ENCODE measurements at regions of chr10 and their contacts with region 1.

Region 1: DNA sequence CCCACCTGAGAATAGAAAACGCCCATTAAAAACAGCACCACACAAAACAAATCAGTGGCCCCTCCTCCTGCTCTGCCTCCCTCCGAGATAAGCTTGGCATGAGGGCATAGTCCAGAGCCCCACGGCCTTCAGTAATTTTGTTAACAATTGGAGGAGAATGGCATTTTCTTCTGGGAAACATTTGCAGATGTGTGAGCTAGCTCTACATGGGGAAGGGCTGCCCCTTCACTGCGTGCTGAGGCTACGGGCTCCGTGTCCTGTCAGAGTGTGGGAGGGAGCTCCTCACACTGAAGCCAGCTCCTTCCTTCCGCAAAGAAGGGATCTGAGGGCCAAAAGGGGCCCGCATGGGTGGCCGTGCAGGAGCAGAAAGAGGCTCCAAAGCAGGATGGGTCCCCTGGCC is 15.2 kb downstream of the GRK5 start:
- DNase-seq: peak in 1 of 5 donors; percentile 60
- H3K4me3 ChIP-seq: no peak overlapping the region
- H3K27ac ChIP-seq: peak overlapping the region; percentile 30 to 58
- H3K4me1 ChIP-seq: peaks cover 27% of the 10 kb centered on the region
- H3K27me3 ChIP-seq: no peaks in the 10 kb centered on the region
- CTCF ChIP-seq: no peak
- EP300 ChIP-seq: no peak
- POLR2A ChIP-seq: no peak

Region 2: DNA sequence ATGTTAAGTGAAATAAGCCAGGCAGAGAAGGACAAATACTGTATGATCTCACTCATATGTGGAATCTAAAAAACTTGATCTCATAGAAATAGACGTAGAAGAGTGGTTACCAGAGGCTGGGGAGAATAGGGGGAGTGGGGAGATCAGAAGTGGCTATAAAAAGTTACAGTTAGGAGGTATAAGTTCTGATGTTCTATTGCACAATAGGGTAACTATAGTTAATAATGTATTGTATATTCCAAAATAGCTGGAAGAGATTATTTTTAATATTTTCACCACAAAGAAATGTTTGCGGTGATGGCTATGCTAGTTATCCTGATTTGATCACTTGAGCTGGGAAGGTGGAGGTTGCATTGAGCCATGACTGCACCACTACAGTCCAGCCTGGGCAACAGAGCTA is 1927.8 kb before region 1 on chr10:
- intact Hi-C with region 1: loop called in 1 of 4 experiments (anchors 5 kb)
- DNase-seq: no peak
- H3K4me3 ChIP-seq: no peak overlapping the region
- H3K27ac ChIP-seq: no peak overlapping the region
- H3K4me1 ChIP-seq: peaks cover 3% of the 10 kb centered on the region
- H3K27me3 ChIP-seq: no peaks in the 10 kb centered on the region
- CTCF ChIP-seq: no peak
- EP300 ChIP-seq: no peak
- POLR2A ChIP-seq: no peak

Region 3: DNA sequence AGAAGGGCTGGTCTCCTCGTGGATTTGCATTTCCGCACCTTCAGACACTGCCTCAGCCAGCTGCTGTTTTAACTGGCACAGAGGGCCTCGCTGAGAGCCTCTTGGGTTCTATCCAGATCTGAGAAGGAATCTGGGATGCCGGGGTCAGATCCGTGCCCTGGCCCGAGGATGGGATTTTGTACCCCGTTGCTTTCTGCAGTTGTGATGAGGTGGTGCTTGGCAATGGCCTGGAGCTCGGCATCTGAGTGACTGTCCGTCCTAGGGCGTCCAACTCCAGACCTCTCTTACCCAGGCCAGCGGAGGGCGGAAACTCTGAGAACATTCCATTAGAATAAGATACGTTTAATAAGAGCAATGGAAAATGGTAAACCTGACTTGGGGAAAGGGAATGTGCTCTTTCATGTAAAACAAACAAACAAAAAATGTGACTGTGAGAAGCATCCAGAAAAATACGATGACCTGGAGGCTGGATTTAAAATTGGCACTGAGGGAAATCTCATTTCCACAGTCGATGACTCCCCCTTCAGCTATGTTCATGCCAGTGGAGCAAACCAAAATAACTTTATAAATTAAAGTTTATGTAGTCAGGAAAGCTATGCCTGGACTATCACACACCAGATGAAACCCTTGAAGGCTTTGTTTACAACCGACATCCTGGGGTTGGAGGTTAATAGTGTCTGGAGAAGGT is 24.5 kb after region 1 on chr10:
- intact Hi-C with region 1: loop called in 1 of 4 experiments (anchors 1 kb)
- DNase-seq: peak in 2 of 5 donors; percentile 41 to 50
- H3K4me3 ChIP-seq: no peak overlapping the region
- H3K27ac ChIP-seq: no peak overlapping the region
- H3K4me1 ChIP-seq: peaks cover 36% of the 10 kb centered on the region
- H3K27me3 ChIP-seq: no peaks in the 10 kb centered on the region
- CTCF ChIP-seq: no peak
- EP300 ChIP-seq: no peak
- POLR2A ChIP-seq: no peak